Sciatic nerve (tissue), 2 donors: ENCODE measurements at regions of chr17 and their contacts with region 1.

Region 1: GRCh38 chr17:67376737-67377487 is at the start of gene PITPNC1:
- DNase-seq: peak; percentile 89
- ATAC-seq: peak; percentile 91
- total RNA-seq, gene PITPNC1: 27.9 TPM

Region 2: DNA sequence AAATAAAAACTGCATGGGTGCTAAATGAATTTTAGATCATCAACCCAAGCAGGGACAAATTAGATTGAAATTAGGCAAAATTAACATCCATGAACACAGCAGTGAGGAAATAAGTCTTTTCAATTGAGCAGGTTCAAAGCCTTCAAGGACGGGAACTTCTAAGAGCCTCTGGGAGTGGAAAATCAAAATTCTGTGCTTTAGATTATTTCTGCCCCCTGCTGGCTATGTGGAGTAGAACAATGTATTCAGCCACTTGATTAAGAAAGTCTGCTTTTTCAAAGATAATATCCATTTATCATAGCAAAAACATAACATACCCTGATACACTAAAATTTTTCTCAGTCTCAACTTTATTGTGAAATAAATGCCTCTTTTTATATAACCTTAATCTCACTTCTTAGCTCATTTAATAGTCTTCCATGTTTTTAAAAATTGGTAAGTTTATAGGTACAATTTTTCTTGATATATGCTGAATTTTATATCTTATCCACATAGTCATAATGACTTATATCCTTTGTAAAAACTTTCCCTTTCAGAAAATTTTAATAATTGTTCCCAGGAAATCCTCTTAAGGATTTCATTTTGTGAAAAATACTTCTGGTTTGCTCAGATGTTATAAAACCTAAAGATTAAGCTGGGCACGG is 312.7 kb after region 1 on chr17:
- intact Hi-C with region 1: loop called (anchors 5 kb)
- DNase-seq: no peak
- ATAC-seq: peak; percentile 71